ENCODE measurements at regions of chr12 and their contacts with region 1.

Region 1: GRCh38 chr12:48454667-48455066 is 17.7 kb upstream of the ANP32D start:
- DNase-seq: peak in 2 of 4 experiments; percentile 31 to 47
- ATAC-seq: peak; percentile 55; the same call in 2 of the 3 replicates
- H3K4me3 ChIP-seq: no peak overlapping the region
- H3K27ac ChIP-seq: no peak overlapping the region
- H3K4me1 ChIP-seq: peaks cover 0 to 8% of the 10 kb centered on the region in 2 experiments; a peak in 2 of 5 replicates
- H3K27me3 ChIP-seq: 0 out of 5 replicates have a peak, but pooled peaks cover 0 to 4% of the 10 kb centered on the region in 2 experiments
- CTCF ChIP-seq: peak; percentile 48 to 77 (median 58); a peak in 5 of 6 replicates
- EP300 ChIP-seq: no peak
- POLR2A ChIP-seq: no peak
- RAD21 ChIP-seq: peak; percentile 90 to 96

Region 2: DNA sequence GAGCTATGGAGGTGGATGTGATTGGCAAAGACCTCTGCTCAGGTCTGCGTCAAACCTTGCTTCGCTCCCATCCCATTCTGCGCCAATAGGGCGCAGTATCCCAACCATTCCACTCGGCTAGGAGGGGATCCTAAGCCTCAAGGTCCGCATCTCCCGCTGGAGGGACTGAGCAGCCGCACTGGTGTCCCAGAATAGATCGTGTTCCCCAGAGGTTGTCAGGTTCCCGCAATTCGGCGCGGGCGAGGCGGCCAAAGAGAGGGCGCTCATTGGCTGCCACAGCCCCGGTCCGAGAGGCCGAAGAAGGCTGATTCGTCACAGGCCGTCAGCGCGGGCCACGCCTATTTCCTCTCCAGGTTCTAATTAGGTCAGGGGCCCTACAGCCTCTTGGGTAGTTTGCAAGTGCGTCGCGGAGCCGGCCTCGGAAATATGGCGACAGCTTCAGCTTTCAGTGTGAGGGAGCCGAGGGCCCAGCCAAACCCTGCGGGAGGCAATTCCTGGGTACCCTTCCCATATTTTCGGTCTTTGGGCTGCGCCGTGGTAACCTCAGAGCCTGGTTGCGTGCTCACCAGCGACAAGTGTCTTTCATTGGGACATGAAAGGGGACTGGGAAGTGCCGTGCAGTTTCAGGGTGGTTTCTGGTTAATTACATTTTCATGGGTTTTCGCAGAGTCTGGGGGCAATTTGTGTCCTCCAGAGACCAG is 256.5 kb before region 1 on chr12:
- CTCF ChIA-PET with region 1: no interaction called
- POLR2A ChIA-PET with region 1: no interaction called
- in situ Hi-C with region 1: no loop called
- intact Hi-C with region 1: loop called (anchors 1 kb)
- DNase-seq: peak; percentile 96 to 98 (median 96)
- ATAC-seq: peak; percentile 99
- H3K4me3 ChIP-seq: peak overlapping the region; percentile 73
- H3K27ac ChIP-seq: peak overlapping the region; percentile 100
- H3K4me1 ChIP-seq: peaks cover 4 to 9% of the 10 kb centered on the region in 2 experiments; a peak in 3 of 5 replicates
- H3K27me3 ChIP-seq: no peaks in the 10 kb centered on the region; a peak in 1 of 5 replicates
- CTCF ChIP-seq: peak in 2 of 3 experiments; percentile 0 to 18; a peak in 2 of 6 replicates
- EP300 ChIP-seq: no peak
- POLR2A ChIP-seq: peak; percentile 98
- RAD21 ChIP-seq: 0 out of 4 replicates have a peak, but pooled peaks of 1 of the 2 experiments have one; percentile 5

Region 3: DNA sequence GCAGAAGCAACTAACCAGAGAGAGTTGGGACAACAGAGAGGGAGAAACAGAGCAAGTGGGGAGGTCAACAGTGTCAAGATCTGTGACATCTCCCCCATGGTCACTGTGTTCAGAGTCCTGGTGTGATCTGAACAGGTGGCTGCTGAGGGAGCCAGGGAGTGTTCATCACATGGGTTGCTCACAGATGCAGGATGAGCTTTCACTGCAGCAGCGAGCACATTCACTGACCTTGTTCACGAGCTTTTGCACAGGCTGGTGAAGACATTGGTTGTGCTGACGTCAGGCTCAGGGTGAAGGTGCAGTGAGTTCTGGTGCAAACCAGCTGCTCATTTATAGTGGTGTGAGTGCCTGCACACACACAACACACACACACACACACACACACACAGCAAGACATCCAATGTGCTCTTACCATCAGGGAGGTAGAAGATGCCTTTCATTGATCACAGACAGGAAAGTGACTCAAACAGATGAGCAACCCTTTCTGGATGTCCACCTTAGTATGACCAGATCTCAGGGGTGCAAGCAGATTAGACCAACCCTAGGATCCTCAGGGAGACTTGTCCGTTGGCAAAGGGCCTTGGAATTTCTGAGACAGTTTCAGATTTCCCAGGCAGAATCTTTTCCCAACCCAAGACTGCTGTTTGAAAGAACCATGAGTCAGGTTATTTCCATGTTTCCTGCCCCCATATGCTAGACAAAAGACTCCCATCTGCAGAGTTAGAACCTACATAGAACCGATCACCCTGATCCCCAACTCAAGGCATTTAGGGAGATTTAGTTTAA is 207.3 kb before region 1 on chr12:
- CTCF ChIA-PET with region 1: no interaction called
- POLR2A ChIA-PET with region 1: no interaction called
- in situ Hi-C with region 1: no loop called
- intact Hi-C with region 1: loop called (anchors 2 kb)
- DNase-seq: no peak
- ATAC-seq: no peak
- H3K4me3 ChIP-seq: no peak overlapping the region
- H3K27ac ChIP-seq: no peak overlapping the region
- H3K4me1 ChIP-seq: no peaks in the 10 kb centered on the region
- H3K27me3 ChIP-seq: peaks cover 0 to 10% of the 10 kb centered on the region in 2 experiments; a peak in 2 of 5 replicates
- CTCF ChIP-seq: no peak
- EP300 ChIP-seq: no peak
- POLR2A ChIP-seq: no peak
- RAD21 ChIP-seq: no peak

Region 4: DNA sequence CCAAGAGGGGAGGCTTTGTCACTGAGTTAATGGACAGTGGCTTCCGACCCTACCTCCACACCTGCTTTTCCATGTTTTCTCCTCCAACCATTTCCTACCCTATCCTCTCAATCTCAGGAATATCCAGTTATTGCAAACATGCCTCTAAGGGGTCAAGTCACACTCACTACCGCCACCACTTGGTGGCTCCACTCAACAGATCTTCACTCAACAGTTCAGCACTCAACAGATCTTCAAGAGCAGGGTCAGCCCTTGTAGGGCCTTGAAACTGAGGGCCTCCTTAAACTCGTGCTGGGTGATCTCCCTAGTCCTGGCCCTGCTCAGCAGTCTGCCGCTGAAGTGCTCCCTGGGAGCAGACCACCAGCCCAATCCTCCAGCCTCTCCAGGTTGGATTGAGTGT is 118.1 kb before region 1 on chr12:
- CTCF ChIA-PET with region 1: no interaction called
- POLR2A ChIA-PET with region 1: no interaction called
- in situ Hi-C with region 1: no loop called
- intact Hi-C with region 1: loop called (anchors 5 kb)
- DNase-seq: peak in 2 of 4 experiments; percentile 23 to 40
- ATAC-seq: peak; percentile 79
- H3K4me3 ChIP-seq: no peak overlapping the region
- H3K27ac ChIP-seq: no peak overlapping the region
- H3K4me1 ChIP-seq: no peaks in the 10 kb centered on the region
- H3K27me3 ChIP-seq: no peaks in the 10 kb centered on the region
- CTCF ChIP-seq: peak; percentile 46 to 61 (median 48)
- EP300 ChIP-seq: no peak
- POLR2A ChIP-seq: no peak
- RAD21 ChIP-seq: peak in 1 of 2 experiments; percentile 60; a peak in 2 of 4 replicates

Region 5: GRCh38 chr12:48366131-48366530 is 88.5 kb before region 1 on chr12:
- CTCF ChIA-PET with region 1: no interaction called
- POLR2A ChIA-PET with region 1: no interaction called
- in situ Hi-C with region 1: no loop called
- intact Hi-C with region 1: no loop called
- DNase-seq: no peak
- ATAC-seq: no peak
- H3K4me3 ChIP-seq: no peak overlapping the region
- H3K27ac ChIP-seq: no peak overlapping the region
- H3K4me1 ChIP-seq: peaks cover 0 to 9% of the 10 kb centered on the region in 2 experiments; a peak in 2 of 5 replicates
- H3K27me3 ChIP-seq: no peaks in the 10 kb centered on the region
- CTCF ChIP-seq: no peak
- EP300 ChIP-seq: no peak
- POLR2A ChIP-seq: no peak
- RAD21 ChIP-seq: no peak

Region 6: GRCh38 chr12:49253088-49253487 is 798.4 kb after region 1 on chr12:
- CTCF ChIA-PET with region 1: no interaction called
- POLR2A ChIA-PET with region 1: no interaction called
- in situ Hi-C with region 1: no loop called
- intact Hi-C with region 1: no loop called
- DNase-seq: no peak
- ATAC-seq: no peak
- H3K4me3 ChIP-seq: no peak overlapping the region
- H3K27ac ChIP-seq: no peak overlapping the region
- H3K4me1 ChIP-seq: peaks cover 12 to 16% of the 10 kb centered on the region in 2 experiments
- H3K27me3 ChIP-seq: no peaks in the 10 kb centered on the region
- CTCF ChIP-seq: no peak
- EP300 ChIP-seq: no peak
- POLR2A ChIP-seq: no peak
- RAD21 ChIP-seq: no peak

Measured in K562 (cell line).